ENCODE measurements at regions of chr6 and their contacts with region 1.

Region 1: GRCh38 chr6:2993755-2994317 is 5.9 kb upstream of the NQO2 start:
- DNase-seq: no peak
- H3K4me3 ChIP-seq: no peak overlapping the region
- CTCF ChIP-seq: no peak

Region 2: GRCh38 chr6:3052481-3053230 is 58.8 kb after region 1 on chr6:
- CTCF ChIA-PET with region 1: interaction called, 36 read pairs
- POLR2A ChIA-PET with region 1: interaction called, 4 read pairs
- DNase-seq: no peak
- H3K4me3 ChIP-seq: no peak overlapping the region
- CTCF ChIP-seq: no peak

Region 3: GRCh38 chr6:3231247-3232016 is 237.6 kb after region 1 on chr6:
- CTCF ChIA-PET with region 1: no interaction called
- POLR2A ChIA-PET with region 1: no interaction called
- DNase-seq: no peak
- H3K4me3 ChIP-seq: peak overlapping the region; percentile 64
- CTCF ChIP-seq: no peak

Measured in AG04449 (cell line).